ENCODE measurements at regions of chr3 and their contacts with region 1.

Region 1: DNA sequence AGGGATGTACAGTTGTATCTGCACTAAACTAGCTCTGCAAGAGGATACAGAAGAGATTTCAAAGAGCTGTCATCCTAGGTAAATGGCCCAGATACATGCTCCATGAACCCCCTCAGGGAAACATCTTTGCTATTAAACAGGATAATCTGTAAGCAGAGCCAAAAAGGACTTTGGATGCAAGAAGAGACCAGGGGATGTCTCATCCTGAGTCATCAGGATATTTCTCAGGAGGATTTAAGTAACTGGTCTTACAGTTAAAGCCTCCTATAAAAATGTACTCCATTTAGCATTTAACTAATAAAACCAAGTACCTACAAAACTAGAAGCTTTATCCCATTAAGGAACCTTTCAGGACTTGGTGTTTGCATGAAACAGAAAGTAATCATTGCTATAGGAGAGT is 48.2 kb upstream of the PHLDB2 start:
- DNase-seq: peak; percentile 94
- ATAC-seq: peak; percentile 71
- H3K4me3 ChIP-seq: no peak overlapping the region
- H3K27ac ChIP-seq: no peak overlapping the region
- H3K4me1 ChIP-seq: peaks cover 10% of the 10 kb centered on the region
- H3K27me3 ChIP-seq: no peaks in the 10 kb centered on the region
- CTCF ChIP-seq: no peak
- POLR2A ChIP-seq: no peak
- RAD21 ChIP-seq: no peak

Region 2: DNA sequence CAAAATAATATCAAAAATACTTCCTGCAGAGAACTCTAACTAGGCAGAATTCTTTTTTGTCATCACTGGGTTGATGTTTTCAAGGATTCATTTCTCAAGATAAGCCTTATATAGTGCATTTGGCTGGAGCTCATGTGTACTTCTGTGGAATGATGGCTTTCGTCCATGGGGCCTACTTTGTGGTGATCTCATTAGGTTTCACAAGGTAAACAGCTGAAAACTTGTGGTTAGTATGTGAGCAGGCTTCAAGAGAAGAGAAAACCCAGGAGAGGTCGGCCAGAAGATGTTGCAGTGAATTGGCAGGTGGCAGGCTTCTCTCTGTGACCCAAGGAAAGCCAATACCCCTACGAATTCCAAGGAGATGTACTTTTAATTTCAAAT is 73.2 kb before region 1 on chr3:
- CTCF ChIA-PET with region 1: no interaction called
- POLR2A ChIA-PET with region 1: no interaction called
- dilution Hi-C with region 1: no loop called
- in situ Hi-C with region 1: no loop called
- intact Hi-C with region 1: loop called (anchors 2 kb)
- DNase-seq: peak; percentile 98
- ATAC-seq: peak; percentile 65
- H3K4me3 ChIP-seq: no peak overlapping the region
- H3K27ac ChIP-seq: no peak overlapping the region
- H3K4me1 ChIP-seq: peaks cover 19% of the 10 kb centered on the region
- H3K27me3 ChIP-seq: peaks cover 13% of the 10 kb centered on the region
- CTCF ChIP-seq: no peak
- POLR2A ChIP-seq: no peak
- RAD21 ChIP-seq: peak; percentile 13; the same call in 1 of the 2 replicates

Region 3: GRCh38 chr3:111846717-111847116 is 35.8 kb after region 1 on chr3:
- CTCF ChIA-PET with region 1: no interaction called
- POLR2A ChIA-PET with region 1: no interaction called
- dilution Hi-C with region 1: no loop called
- in situ Hi-C with region 1: no loop called
- intact Hi-C with region 1: loop called (anchors 5 kb)
- DNase-seq: peak; percentile 91
- ATAC-seq: peak; percentile 65
- H3K4me3 ChIP-seq: no peak overlapping the region
- H3K27ac ChIP-seq: no peak overlapping the region
- H3K4me1 ChIP-seq: peaks cover 8% of the 10 kb centered on the region; the same call in 1 of the 2 replicates
- H3K27me3 ChIP-seq: no peaks in the 10 kb centered on the region
- CTCF ChIP-seq: no peak
- POLR2A ChIP-seq: no peak
- RAD21 ChIP-seq: no peak

Region 4: DNA sequence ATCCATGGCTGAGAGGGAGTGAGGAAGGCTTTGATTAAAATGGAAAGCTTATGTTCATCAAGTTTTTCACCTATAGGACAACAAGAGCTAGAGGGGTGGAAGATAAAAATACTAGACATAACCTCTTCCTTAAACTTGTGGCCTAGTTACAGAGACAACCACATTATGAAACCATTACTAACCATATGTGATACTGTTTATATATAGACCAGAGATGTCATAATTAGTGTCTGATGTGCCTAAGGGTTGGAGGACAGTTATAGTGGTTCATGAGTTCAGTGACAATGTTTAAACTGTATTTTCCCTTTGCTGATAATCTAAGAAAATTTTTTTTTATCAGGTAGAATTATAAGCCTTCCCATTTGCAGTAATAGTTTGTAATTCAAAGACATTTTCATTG is 71.9 kb after region 1 on chr3:
- CTCF ChIA-PET with region 1: no interaction called
- POLR2A ChIA-PET with region 1: no interaction called
- dilution Hi-C with region 1: no loop called
- in situ Hi-C with region 1: no loop called
- intact Hi-C with region 1: no loop called
- DNase-seq: no peak
- ATAC-seq: no peak
- H3K4me3 ChIP-seq: no peak overlapping the region
- H3K27ac ChIP-seq: no peak overlapping the region
- H3K4me1 ChIP-seq: no peaks in the 10 kb centered on the region
- H3K27me3 ChIP-seq: no peaks in the 10 kb centered on the region
- CTCF ChIP-seq: no peak
- POLR2A ChIP-seq: no peak
- RAD21 ChIP-seq: no peak